PC-9 (cell line): ENCODE measurements at regions of chr10 and their contacts with region 1.

Region 1: DNA sequence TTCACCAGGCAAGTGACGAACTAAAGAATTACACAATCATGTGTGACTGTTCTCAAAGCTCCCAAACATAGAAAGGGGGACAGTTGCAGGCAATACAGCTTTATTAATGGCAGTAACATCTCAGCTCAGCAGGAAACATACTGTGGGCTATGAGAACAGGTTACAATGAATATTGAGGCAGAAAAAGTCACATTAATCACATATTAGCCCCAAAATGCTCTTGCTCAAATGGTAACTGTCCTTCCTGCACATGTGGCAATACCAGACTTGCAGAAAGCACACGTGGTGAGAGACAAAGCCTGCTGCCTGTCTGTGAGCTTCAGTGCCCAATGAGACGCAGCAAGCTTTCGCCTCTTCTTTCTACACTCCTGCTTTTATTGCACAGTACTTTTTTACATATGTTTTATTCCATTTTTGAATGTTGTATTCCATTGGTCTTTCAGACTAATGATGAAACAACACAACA is 104.9 kb upstream of the ACBD5 start:
- DNase-seq: no peak
- H3K4me3 ChIP-seq: no peak overlapping the region
- H3K27ac ChIP-seq: no peak overlapping the region
- H3K4me1 ChIP-seq: no peaks in the 10 kb centered on the region
- H3K27me3 ChIP-seq: no peaks in the 10 kb centered on the region
- CTCF ChIP-seq: no peak

Region 2: DNA sequence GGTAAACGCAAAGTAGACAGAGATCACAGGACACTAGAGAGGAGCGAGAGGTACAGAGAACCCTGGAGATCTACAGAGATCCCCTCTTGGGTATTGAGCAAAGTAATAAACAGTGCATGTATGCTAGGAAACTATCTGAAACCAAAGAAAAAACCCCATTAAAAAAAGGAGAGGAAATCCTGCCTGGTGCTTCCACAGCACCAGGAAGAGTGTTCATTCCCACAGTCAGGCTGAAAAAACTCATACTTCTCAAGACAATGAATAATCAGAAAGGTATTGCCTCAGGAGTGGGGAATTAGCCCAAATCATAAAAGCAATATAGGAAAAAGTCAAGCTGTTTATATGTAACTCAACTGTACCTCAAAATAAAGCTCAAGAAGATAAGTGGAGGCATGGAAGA is 304.3 kb before region 1 on chr10:
- CTCF ChIA-PET with region 1: no interaction called
- POLR2A ChIA-PET with region 1: no interaction called
- intact Hi-C with region 1: no loop called
- DNase-seq: no peak
- H3K4me3 ChIP-seq: no peak overlapping the region
- H3K27ac ChIP-seq: no peak overlapping the region
- H3K4me1 ChIP-seq: no peaks in the 10 kb centered on the region
- H3K27me3 ChIP-seq: no peaks in the 10 kb centered on the region
- CTCF ChIP-seq: no peak

Region 3: DNA sequence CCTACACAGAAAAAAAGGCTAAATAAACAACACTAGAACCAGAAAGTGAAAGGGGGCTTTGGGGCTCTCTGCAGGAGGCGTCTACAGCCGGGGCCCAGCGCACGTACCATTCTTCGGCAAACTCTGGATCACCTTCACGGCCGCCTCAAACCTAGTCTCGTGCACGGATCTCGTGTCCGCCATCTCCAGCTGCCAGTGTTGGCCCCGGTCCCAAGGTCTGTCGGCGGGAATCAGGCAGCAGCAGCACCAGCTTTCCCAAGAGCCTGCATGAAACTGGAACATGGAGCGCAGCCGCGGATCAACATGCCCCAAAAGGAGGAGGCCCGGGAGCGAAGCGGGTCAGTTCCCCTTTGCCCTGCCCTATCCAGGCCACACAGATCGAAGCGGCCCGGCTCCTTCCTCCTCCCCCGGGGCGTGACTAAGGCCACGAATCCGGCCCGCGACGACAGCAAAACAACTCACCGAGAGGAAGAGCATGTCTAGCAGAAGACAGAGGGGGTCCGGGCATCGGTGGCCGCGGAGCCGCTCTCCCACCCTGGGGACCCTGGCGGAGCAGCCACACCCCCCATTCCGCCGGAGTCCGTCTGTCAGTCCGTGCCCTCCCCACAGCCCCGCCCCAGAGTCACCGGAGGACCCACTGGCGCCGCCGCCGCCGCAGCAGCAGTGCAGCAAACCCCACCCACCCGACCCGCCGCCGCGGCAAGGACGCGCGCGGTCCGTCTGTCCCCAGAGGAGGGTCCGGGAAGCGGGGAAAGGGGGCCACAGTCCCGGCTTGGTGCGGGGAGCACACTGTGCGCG is 105.1 kb before region 1 on chr10 and contains the start of gene ACBD5:
- CTCF ChIA-PET with region 1: no interaction called
- POLR2A ChIA-PET with region 1: no interaction called
- intact Hi-C with region 1: no loop called
- DNase-seq: peak; percentile 66 to 81
- H3K4me3 ChIP-seq: peak within 1 kb of the TSS; percentile 72
- H3K27ac ChIP-seq: peak within 1 kb of the TSS; percentile 74
- H3K4me1 ChIP-seq: peaks cover 14% of the 10 kb centered on the region; the same call in 1 of the 2 replicates
- H3K27me3 ChIP-seq: no peaks in the 10 kb centered on the region
- CTCF ChIP-seq: no peak
- total RNA-seq, gene ACBD5: 17.0 and 17.2 TPM in 2 replicates

Region 4: GRCh38 chr10:27359792-27360355 is 14.4 kb after region 1 on chr10:
- CTCF ChIA-PET with region 1: no interaction called
- POLR2A ChIA-PET with region 1: no interaction called
- intact Hi-C with region 1: no loop called
- DNase-seq: no peak
- H3K4me3 ChIP-seq: no peak overlapping the region
- H3K27ac ChIP-seq: no peak overlapping the region
- H3K4me1 ChIP-seq: no peaks in the 10 kb centered on the region
- H3K27me3 ChIP-seq: no peaks in the 10 kb centered on the region
- CTCF ChIP-seq: no peak

Region 5: DNA sequence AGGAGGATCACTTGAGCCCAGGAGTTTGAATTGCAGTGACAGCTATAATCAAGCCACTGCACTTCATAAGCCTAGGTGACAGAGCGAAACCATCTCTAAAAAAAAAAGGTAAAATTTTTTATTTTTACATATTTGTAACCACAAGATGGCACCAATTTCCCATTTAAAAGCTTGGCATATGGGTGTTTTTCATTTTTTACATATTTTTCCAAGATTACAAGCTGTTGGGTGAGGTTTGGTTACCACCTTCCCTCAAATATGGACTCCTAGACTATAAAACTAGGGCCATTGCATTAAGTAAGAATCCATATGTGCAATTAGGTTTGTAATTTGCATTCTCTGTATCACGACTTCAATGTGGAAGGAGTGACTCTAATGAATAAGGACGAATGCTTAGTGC is 24.4 kb after region 1 on chr10:
- CTCF ChIA-PET with region 1: interaction called, 18 read pairs
- POLR2A ChIA-PET with region 1: no interaction called
- intact Hi-C with region 1: no loop called
- DNase-seq: no peak
- H3K4me3 ChIP-seq: no peak overlapping the region
- H3K27ac ChIP-seq: no peak overlapping the region
- H3K4me1 ChIP-seq: no peaks in the 10 kb centered on the region
- H3K27me3 ChIP-seq: peaks cover 17% of the 10 kb centered on the region; the same call in 1 of the 2 replicates
- CTCF ChIP-seq: peak; percentile 55